ENCODE measurements at regions of chr22 and their contacts with region 1.

Region 1: GRCh38 chr22:44080936-44081861 is 57.1 kb downstream of the PARVB start:
- DNase-seq: peak; percentile 88
- H3K4me3 ChIP-seq: no peak overlapping the region
- H3K27ac ChIP-seq: no peak overlapping the region
- H3K4me1 ChIP-seq: no peaks in the 10 kb centered on the region; a peak in 1 of 4 replicates
- H3K27me3 ChIP-seq: no peaks in the 10 kb centered on the region
- CTCF ChIP-seq: peak; percentile 91
- EP300 ChIP-seq: no peak
- RAD21 ChIP-seq: peak; percentile 85

Region 2: DNA sequence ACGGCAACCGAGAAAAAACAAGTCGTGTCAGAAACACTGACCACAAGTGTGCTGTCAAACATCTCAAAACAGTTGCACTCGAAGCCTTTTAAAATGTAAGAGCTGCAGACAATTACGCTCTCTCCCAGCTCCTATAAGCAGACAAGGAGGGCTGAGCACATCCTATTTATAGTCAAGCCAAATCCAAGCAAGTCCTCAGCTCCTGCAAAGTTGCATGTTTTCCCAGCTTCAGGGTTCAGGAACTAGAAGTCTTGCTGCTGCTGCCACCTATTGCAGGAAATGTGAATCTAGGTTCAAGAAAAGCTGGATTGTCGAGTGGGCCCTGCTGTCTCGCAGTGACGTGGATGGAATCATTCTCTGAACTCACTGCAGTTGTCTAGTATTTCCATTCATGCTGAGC is 284.6 kb before region 1 on chr22:
- CTCF ChIA-PET with region 1: no interaction called
- POLR2A ChIA-PET with region 1: no interaction called
- DNase-seq: peak; percentile 11
- H3K4me3 ChIP-seq: no peak overlapping the region
- H3K27ac ChIP-seq: no peak overlapping the region
- H3K4me1 ChIP-seq: no peaks in the 10 kb centered on the region; a peak in 1 of 4 replicates
- H3K27me3 ChIP-seq: no peaks in the 10 kb centered on the region
- CTCF ChIP-seq: peak; percentile 48
- EP300 ChIP-seq: no peak
- RAD21 ChIP-seq: peak; percentile 70

Region 3: GRCh38 chr22:44049486-44050231 is 31.5 kb before region 1 on chr22:
- CTCF ChIA-PET with region 1: interaction called, 15 read pairs
- POLR2A ChIA-PET with region 1: no interaction called
- DNase-seq: peak; percentile 82
- H3K4me3 ChIP-seq: no peak overlapping the region
- H3K27ac ChIP-seq: peak overlapping the region in 1 of 2 experiments; percentile 73; a peak in 2 of 4 replicates
- H3K4me1 ChIP-seq: peaks cover 0 to 23% of the 10 kb centered on the region in 2 experiments; a peak in 1 of 4 replicates
- H3K27me3 ChIP-seq: no peaks in the 10 kb centered on the region
- CTCF ChIP-seq: no peak
- EP300 ChIP-seq: 0 out of 4 replicates have a peak, but pooled peaks of 1 of the 2 experiments have one; percentile 47
- RAD21 ChIP-seq: no peak

Region 4: GRCh38 chr22:44068422-44069191 is 12.6 kb before region 1 on chr22:
- CTCF ChIA-PET with region 1: interaction called, 113 read pairs
- POLR2A ChIA-PET with region 1: no interaction called
- DNase-seq: no peak
- H3K4me3 ChIP-seq: no peak overlapping the region
- H3K27ac ChIP-seq: no peak overlapping the region
- H3K4me1 ChIP-seq: no peaks in the 10 kb centered on the region
- H3K27me3 ChIP-seq: no peaks in the 10 kb centered on the region
- CTCF ChIP-seq: no peak
- EP300 ChIP-seq: no peak
- RAD21 ChIP-seq: no peak

Region 5: GRCh38 chr22:44325718-44326490 is 244.7 kb after region 1 on chr22:
- CTCF ChIA-PET with region 1: interaction called, 13 read pairs
- POLR2A ChIA-PET with region 1: no interaction called
- DNase-seq: peak; percentile 82
- H3K4me3 ChIP-seq: peak overlapping the region; percentile 61 to 62
- H3K27ac ChIP-seq: peak overlapping the region in 1 of 2 experiments; percentile 27; a peak in 1 of 4 replicates
- H3K4me1 ChIP-seq: peaks cover 3 to 18% of the 10 kb centered on the region in 2 experiments; a peak in 1 of 4 replicates
- H3K27me3 ChIP-seq: peaks cover 12% of the 10 kb centered on the region; the same call in 1 of the 2 replicates
- CTCF ChIP-seq: peak; percentile 47
- EP300 ChIP-seq: no peak
- RAD21 ChIP-seq: peak; percentile 32

Region 6: GRCh38 chr22:44625981-44626687 is 544.9 kb after region 1 on chr22:
- CTCF ChIA-PET with region 1: interaction called, 126 read pairs
- POLR2A ChIA-PET with region 1: no interaction called
- DNase-seq: peak; percentile 88
- H3K4me3 ChIP-seq: no peak overlapping the region; a peak in 1 of 4 replicates
- H3K27ac ChIP-seq: no peak overlapping the region
- H3K4me1 ChIP-seq: no peaks in the 10 kb centered on the region; a peak in 1 of 4 replicates
- H3K27me3 ChIP-seq: no peaks in the 10 kb centered on the region
- CTCF ChIP-seq: peak; percentile 98
- EP300 ChIP-seq: no peak
- RAD21 ChIP-seq: peak; percentile 98

Measured in SK-N-SH (cell line).